B cell (primary cell): ENCODE measurements at regions of chr16 and their contacts with region 1.

Region 1: DNA sequence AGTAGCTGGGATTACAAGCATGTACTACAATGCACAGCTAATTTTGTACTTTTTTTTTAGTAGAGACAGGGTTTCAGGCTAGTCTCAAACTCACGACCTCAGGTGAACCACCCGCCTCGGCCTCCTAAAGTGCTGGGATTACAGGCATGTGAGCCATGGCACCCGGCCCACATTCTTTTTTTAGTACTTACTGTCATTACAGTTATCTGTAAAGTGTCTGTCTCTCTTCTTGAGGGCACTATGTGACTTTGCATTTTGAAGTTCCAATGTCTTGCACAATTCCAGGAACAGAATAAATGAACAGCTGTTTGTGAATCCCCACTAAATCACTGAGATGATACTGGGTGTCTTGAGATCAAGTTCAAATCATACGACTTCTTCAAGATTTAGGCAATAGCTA is 1540.3 kb downstream of the CDH11 start:
- DNase-seq: no peak
- ATAC-seq: no peak
- H3K4me3 ChIP-seq: no peak overlapping the region
- H3K4me3 Mint-ChIP-seq: no peak overlapping the region
- H3K27ac ChIP-seq: no peak overlapping the region
- H3K27ac Mint-ChIP-seq: no peak overlapping the region
- H3K4me1 ChIP-seq: no peaks in the 10 kb centered on the region
- H3K4me1 Mint-ChIP-seq: no peaks in the 10 kb centered on the region
- H3K27me3 ChIP-seq: no peaks in the 10 kb centered on the region
- H3K27me3 Mint-ChIP-seq: no peaks in the 10 kb centered on the region
- CTCF ChIP-seq: no peak

Region 2: DNA sequence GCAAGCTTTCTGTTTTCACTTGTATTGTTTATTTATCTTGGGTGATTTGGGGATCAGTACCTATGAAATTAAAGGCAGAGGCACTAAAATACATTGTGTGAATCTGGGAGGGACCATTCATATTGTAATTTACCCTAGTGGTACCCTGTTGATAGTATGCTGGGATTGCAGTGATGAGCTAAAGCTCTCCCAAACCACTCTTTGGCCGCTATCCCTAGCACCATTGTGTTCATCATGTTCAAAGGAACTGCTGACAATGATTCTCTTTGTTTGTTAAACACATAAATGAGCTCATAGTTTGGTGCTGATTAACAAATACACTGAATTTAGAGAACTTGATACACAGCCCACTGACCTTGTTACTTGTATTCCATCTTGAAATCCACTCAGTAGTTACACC is 70.5 kb after region 1 on chr16:
- CTCF ChIA-PET with region 1: no interaction called
- POLR2A ChIA-PET with region 1: no interaction called
- intact Hi-C with region 1: loop called (anchors 10 kb)
- DNase-seq: no peak
- ATAC-seq: no peak
- H3K4me3 ChIP-seq: no peak overlapping the region
- H3K4me3 Mint-ChIP-seq: no peak overlapping the region
- H3K27ac ChIP-seq: no peak overlapping the region
- H3K27ac Mint-ChIP-seq: no peak overlapping the region
- H3K4me1 ChIP-seq: no peaks in the 10 kb centered on the region
- H3K4me1 Mint-ChIP-seq: no peaks in the 10 kb centered on the region
- H3K27me3 ChIP-seq: no peaks in the 10 kb centered on the region
- H3K27me3 Mint-ChIP-seq: no peaks in the 10 kb centered on the region
- CTCF ChIP-seq: no peak